ENCODE measurements at regions of chr1 and their contacts with region 1.

Region 1: GRCh38 chr1:180482425-180483275 is 19.7 kb downstream of the ACBD6 start:
- DNase-seq: peak; percentile 39 to 62
- ATAC-seq: peak; percentile 51 to 78; a peak in 4 of 6 replicates
- H3K4me3 ChIP-seq: no peak overlapping the region
- H3K27ac ChIP-seq: no peak overlapping the region
- H3K4me1 ChIP-seq: peaks cover 5% of the 10 kb centered on the region; the same call in 1 of the 3 replicates
- CTCF ChIP-seq: peak; percentile 84
- EP300 ChIP-seq: no peak
- POLR2A ChIP-seq: no peak
- RAD21 ChIP-seq: peak; percentile 52 to 57

Region 2: GRCh38 chr1:180229152-180229973 is 253.3 kb before region 1 on chr1:
- CTCF ChIA-PET with region 1: interaction called, 14 read pairs
- POLR2A ChIA-PET with region 1: no interaction called
- DNase-seq: peak; percentile 65 to 69
- ATAC-seq: peak; percentile 54 to 57
- H3K4me3 ChIP-seq: peak overlapping the region; percentile 70
- H3K27ac ChIP-seq: peak overlapping the region; percentile 69 to 87
- H3K4me1 ChIP-seq: peaks cover 4% of the 10 kb centered on the region; the same call in 2 of the 3 replicates
- CTCF ChIP-seq: no peak
- EP300 ChIP-seq: no peak
- POLR2A ChIP-seq: peak; percentile 39
- RAD21 ChIP-seq: no peak

Region 3: GRCh38 chr1:180252638-180253536 is 229.8 kb before region 1 on chr1:
- CTCF ChIA-PET with region 1: interaction called, 102 read pairs
- POLR2A ChIA-PET with region 1: no interaction called
- DNase-seq: peak; percentile 71 to 76
- ATAC-seq: peak; percentile 49 to 84; a peak in 5 of 6 replicates
- H3K4me3 ChIP-seq: no peak overlapping the region
- H3K27ac ChIP-seq: no peak overlapping the region
- H3K4me1 ChIP-seq: no peaks in the 10 kb centered on the region
- CTCF ChIP-seq: peak; percentile 87
- EP300 ChIP-seq: no peak
- POLR2A ChIP-seq: no peak
- RAD21 ChIP-seq: peak; percentile 89 to 95

Region 4: DNA sequence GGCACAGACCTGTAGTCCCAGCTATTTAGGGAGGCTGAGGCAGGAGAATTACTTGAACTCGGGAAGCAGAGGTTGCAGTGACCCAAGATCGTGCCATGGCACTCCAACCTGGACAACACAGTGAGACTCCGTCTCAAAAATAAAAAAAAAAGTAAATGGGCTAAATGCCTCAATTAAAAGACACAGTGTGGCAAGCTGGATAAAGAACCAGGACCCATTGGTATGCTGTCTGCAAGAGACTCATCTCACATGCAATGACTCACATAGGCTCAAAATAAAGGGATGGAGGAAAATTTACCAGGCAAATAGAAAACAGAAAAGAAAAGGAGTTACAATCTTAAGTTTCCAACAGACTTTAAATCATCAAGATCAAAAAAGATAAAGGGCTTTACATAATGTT is 20.5 kb before region 1 on chr1:
- CTCF ChIA-PET with region 1: interaction called, 14 read pairs
- POLR2A ChIA-PET with region 1: no interaction called
- DNase-seq: no peak
- ATAC-seq: no peak
- H3K4me3 ChIP-seq: no peak overlapping the region
- H3K27ac ChIP-seq: no peak overlapping the region
- H3K4me1 ChIP-seq: no peaks in the 10 kb centered on the region
- CTCF ChIP-seq: no peak
- EP300 ChIP-seq: no peak
- POLR2A ChIP-seq: no peak
- RAD21 ChIP-seq: no peak

Region 5: GRCh38 chr1:180468311-180468710 is 14.3 kb before region 1 on chr1:
- CTCF ChIA-PET with region 1: interaction called, 14 read pairs
- POLR2A ChIA-PET with region 1: no interaction called
- DNase-seq: no peak
- ATAC-seq: no peak
- H3K4me3 ChIP-seq: no peak overlapping the region
- H3K27ac ChIP-seq: no peak overlapping the region
- H3K4me1 ChIP-seq: peaks cover 10% of the 10 kb centered on the region; the same call in 2 of the 3 replicates
- CTCF ChIP-seq: no peak
- EP300 ChIP-seq: no peak
- POLR2A ChIP-seq: no peak
- RAD21 ChIP-seq: no peak

Region 6: GRCh38 chr1:180494370-180494769 is 11.7 kb after region 1 on chr1:
- CTCF ChIA-PET with region 1: interaction called, 16 read pairs
- POLR2A ChIA-PET with region 1: no interaction called
- DNase-seq: no peak
- ATAC-seq: no peak
- H3K4me3 ChIP-seq: no peak overlapping the region
- H3K27ac ChIP-seq: no peak overlapping the region
- H3K4me1 ChIP-seq: peaks cover 20% of the 10 kb centered on the region; the same call in 2 of the 3 replicates
- CTCF ChIP-seq: no peak
- EP300 ChIP-seq: no peak
- POLR2A ChIP-seq: no peak
- RAD21 ChIP-seq: no peak

Measured in A549 (cell line).